Lower leg skin (tissue), 4 donors: ENCODE measurements at regions of chr17 and their contacts with region 1.

Region 1: DNA sequence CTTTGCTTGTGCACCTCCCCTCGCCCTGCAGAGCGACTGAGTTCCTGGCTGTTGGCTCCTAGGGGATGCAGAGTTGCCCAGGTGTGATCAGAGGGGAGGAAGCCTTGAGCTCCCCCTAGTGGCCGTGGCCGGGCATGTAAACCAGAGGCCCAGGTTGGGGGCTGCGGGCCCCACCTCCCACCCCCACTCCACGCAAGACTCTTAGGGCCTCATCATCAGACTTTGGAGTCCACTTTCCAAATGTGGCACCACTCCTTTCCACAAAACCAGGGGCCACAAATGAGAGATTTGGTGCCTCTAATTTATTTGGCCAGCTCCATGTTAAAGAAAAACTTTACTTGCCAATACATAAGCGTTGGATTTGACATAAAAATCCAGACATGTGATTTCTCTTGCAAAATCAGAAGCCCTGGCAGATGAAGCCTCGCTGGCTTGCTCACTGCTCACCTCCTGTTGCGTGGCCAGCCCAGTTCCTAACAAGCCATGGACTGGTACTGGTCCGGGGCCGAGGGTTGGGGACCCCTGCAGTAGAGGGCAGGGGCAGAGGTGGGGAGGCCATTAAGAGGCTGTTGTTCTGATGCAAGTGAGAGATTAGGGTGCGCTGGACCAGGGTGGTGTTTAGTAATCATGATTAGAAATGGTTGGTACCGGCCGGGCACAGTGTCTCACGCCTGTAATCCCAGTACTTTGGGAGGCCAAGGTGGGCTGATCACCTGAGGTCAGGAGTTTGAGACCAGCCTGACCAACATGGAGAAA is 28.7 kb upstream of the GAS7 start:
- DNase-seq: peak; percentile 27 to 88
- H3K4me3 ChIP-seq: no peak overlapping the region
- CTCF ChIP-seq: peak in 1 of 3 donors; percentile 66
- POLR2A ChIP-seq: no peak

Region 2: DNA sequence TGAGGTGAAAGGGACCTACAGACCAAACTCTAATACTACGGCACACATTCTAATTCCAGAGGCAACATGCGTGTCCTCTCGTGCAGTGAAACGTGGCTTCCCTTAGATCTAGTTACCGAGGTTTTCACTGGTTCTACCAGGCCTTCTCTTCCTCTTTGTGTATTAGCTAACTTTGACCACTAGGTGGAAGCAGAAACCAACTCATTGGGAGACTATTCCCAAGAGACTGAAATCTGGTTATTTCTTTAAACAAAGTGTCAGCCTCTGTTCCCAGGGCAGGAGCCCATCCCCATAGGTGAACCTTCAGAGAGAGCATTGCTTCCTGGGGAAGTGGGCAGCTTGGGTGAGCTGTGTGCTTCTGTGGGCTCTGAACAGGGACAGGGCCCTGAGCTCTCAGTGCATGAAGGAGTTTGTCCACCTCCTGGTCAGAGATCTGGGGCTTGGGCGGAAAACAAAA is 302.3 kb before region 1 on chr17:
- intact Hi-C with region 1: loop called (anchors 5 kb)
- DNase-seq: peak in 1 of 2 donors; percentile 38
- H3K4me3 ChIP-seq: no peak overlapping the region
- CTCF ChIP-seq: peak in 1 of 3 donors; percentile 60
- POLR2A ChIP-seq: no peak

Region 3: GRCh38 chr17:9987779-9988574 is 239.1 kb before region 1 on chr17:
- intact Hi-C with region 1: loop called (anchors 10 kb)
- DNase-seq: no peak
- H3K4me3 ChIP-seq: no peak overlapping the region
- CTCF ChIP-seq: no peak
- POLR2A ChIP-seq: no peak

Region 4: GRCh38 chr17:11284811-11285210 is 1057.7 kb after region 1 on chr17:
- intact Hi-C with region 1: no loop called
- DNase-seq: peak in 1 of 2 donors; percentile 54
- H3K4me3 ChIP-seq: no peak overlapping the region
- CTCF ChIP-seq: no peak
- POLR2A ChIP-seq: no peak